Activated CD4-positive, alpha-beta T cell treated with anti-CD3 and anti-CD28 coated beads for 36 hours (primary cell): ENCODE measurements at regions of chr13 and their contacts with region 1.

Region 1: GRCh38 chr13:99442273-99442895 is 58.9 kb upstream of the TM9SF2 start:
- DNase-seq: peak; percentile 61
- ATAC-seq: peak; percentile 61
- H3K4me3 Mint-ChIP-seq: no peak overlapping the region
- H3K27ac Mint-ChIP-seq: no peak overlapping the region
- H3K4me1 Mint-ChIP-seq: peaks cover 9% of the 10 kb centered on the region
- H3K27me3 Mint-ChIP-seq: peaks cover 2% of the 10 kb centered on the region

Region 2: GRCh38 chr13:98821372-98822224 is 620.8 kb before region 1 on chr13:
- CTCF ChIA-PET with region 1: no interaction called
- POLR2A ChIA-PET with region 1: no interaction called
- intact Hi-C with region 1: no loop called
- DNase-seq: no peak
- ATAC-seq: no peak
- H3K4me3 Mint-ChIP-seq: no peak overlapping the region
- H3K27ac Mint-ChIP-seq: no peak overlapping the region
- H3K4me1 Mint-ChIP-seq: peaks cover 12% of the 10 kb centered on the region
- H3K27me3 Mint-ChIP-seq: no peaks in the 10 kb centered on the region

Region 3: DNA sequence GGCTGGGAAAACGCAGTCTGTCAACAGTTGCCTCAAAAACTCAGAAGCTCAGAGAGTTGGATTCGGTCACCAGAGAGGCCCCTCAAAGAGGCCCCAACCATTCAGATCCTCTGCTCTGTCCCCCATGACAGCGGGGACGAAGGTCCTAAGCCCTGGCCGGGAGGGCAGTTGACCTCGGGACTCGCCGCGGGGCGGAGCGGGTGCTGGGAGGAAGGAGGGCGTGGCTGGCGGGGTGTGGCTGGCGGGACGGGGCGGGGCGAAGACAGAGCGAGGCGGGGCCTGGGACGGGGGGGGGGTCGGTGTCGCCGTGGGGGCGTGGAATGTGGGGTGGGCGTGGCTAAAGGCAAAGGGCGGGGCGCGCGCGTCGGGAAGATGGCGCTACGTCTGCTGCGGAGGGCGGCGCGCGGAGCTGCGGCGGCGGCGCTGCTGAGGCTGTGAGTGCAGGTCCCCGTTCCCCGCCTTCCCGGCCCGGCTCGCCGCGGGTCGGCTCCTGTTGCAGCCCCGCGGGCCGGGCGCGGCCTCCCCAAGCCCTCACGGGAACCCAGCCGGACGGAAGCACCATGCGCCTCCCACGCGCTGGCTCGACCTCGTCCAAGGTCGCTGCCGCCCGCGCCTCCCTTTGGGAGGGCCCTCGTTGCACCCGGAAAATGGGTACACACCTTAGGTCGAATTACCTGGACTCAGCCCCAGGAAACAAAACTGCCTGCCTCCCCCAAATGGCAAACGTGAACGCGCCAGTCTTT is 164.1 kb after region 1 on chr13:
- CTCF ChIA-PET with region 1: interaction called, 3 read pairs
- POLR2A ChIA-PET with region 1: no interaction called
- intact Hi-C with region 1: loop called in 1 of 2 experiments (anchors 1 kb)
- DNase-seq: peak; percentile 95
- ATAC-seq: peak; percentile 89
- H3K4me3 Mint-ChIP-seq: peak within 1 kb of the TSS; percentile 83
- H3K27ac Mint-ChIP-seq: peak within 1 kb of the TSS; percentile 81
- H3K4me1 Mint-ChIP-seq: peaks cover 42% of the 10 kb centered on the region
- H3K27me3 Mint-ChIP-seq: no peaks in the 10 kb centered on the region

Region 4: DNA sequence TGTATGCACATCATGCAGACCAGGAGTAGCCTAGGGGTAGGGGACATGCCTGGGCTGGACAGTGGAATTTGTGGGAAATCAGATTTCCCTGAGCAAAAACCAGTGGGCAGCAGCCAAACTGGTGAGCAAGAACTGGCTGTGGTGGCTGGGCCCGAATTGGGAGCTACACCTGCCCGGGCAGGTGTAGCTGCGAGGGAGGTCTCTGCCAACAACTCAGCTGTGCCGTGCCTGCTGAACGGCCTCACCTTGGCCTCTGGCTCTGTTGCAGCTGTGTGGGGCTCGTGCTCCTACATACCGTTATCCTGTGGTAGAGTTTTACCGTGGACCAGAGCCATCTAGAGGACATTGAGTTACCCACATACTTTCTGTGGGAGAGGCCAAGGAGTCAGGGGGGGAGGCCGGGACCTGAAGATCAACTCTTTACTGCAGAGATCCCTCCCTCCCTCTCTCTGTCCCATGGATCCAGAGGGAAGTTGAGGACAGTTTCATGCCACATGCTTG is 172.1 kb after region 1 on chr13:
- CTCF ChIA-PET with region 1: no interaction called
- POLR2A ChIA-PET with region 1: no interaction called
- intact Hi-C with region 1: loop called (anchors 1 to 2 kb)
- DNase-seq: peak; percentile 36
- ATAC-seq: peak; percentile 77
- H3K4me3 Mint-ChIP-seq: no peak overlapping the region
- H3K27ac Mint-ChIP-seq: no peak overlapping the region
- H3K4me1 Mint-ChIP-seq: peaks cover 21% of the 10 kb centered on the region
- H3K27me3 Mint-ChIP-seq: no peaks in the 10 kb centered on the region

Region 5: DNA sequence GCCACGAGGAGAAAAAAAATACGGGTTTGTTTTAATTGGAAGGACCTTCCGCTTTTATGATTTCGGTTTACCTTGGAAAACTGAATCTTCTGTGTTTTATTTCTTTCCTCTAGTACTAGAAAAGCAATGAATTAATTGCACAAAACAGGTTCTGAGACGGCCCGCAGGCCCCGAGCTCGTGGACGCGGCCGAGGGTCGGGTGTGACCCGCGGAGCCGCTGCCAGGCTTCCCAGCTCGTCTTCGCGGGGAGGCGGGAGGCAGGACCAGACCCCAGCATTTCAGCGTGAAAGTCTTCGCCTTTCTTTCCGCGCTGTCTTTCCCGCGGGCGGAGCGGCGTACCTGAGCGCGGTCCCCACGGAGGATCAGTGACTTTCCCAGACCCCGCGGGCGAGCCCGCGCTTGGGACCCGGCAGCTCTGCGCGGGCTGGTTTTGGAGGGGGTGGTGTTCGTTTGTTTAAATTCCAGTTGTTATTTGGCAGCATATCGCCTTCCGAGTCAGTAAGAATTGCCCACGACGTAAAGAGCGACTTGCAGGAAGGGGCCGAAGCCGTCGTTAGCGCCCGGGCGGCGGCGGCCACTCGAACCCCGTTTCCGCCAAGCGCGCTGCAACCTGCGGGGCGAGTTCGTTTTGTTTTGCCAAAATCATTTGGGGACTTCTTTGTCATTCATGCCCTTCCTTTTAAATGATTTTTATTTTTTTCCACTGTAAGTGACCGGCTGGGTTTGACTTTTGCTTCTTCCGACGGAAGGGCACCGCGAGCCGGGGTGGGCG is 453.0 kb after region 1 on chr13:
- CTCF ChIA-PET with region 1: no interaction called
- POLR2A ChIA-PET with region 1: no interaction called
- intact Hi-C with region 1: loop called in 1 of 2 experiments (anchors 5 kb)
- DNase-seq: peak; percentile 24
- ATAC-seq: no peak
- H3K4me3 Mint-ChIP-seq: peak overlapping the region; percentile 60
- H3K27ac Mint-ChIP-seq: no peak overlapping the region
- H3K4me1 Mint-ChIP-seq: peaks cover 9% of the 10 kb centered on the region
- H3K27me3 Mint-ChIP-seq: peaks cover 45% of the 10 kb centered on the region

Region 6: GRCh38 chr13:99969919-99970621 is 527.7 kb after region 1 on chr13:
- CTCF ChIA-PET with region 1: no interaction called
- POLR2A ChIA-PET with region 1: no interaction called
- intact Hi-C with region 1: loop called in 1 of 2 experiments (anchors 10 kb)
- DNase-seq: peak; percentile 63
- ATAC-seq: peak; percentile 54
- H3K4me3 Mint-ChIP-seq: peak overlapping the region; percentile 72
- H3K27ac Mint-ChIP-seq: no peak overlapping the region
- H3K4me1 Mint-ChIP-seq: peaks cover 17% of the 10 kb centered on the region
- H3K27me3 Mint-ChIP-seq: peaks cover 64% of the 10 kb centered on the region

Region 7: DNA sequence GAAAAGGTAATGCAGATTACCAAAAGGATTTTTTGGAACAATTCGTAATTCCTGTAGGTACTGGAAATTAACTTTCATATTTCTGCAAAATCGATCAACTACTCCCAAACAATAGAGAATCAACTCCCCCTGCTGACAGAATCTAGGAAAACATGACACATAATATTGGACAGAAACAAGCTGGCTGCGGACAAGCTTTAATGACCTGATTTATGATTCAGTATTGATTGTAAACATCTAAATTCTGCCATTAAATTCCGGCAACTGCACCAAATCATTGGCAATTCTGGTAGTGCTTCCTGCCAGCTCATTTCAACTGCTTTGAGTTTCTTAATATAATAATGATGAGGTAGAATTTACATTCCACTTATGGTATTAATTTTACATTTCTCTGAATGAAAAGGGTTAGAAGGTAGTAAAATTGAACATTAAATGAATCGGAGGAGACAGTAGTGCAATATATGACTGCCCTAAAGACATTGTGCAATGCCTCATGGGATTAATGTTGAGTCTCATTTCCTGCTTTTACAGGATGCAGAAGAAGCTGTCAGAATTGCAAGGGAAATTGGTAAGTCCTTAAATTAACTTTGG is 793.0 kb after region 1 on chr13:
- CTCF ChIA-PET with region 1: no interaction called
- POLR2A ChIA-PET with region 1: no interaction called
- intact Hi-C with region 1: loop called in 1 of 2 experiments (anchors 10 kb)
- DNase-seq: no peak
- ATAC-seq: no peak
- H3K4me3 Mint-ChIP-seq: no peak overlapping the region
- H3K27ac Mint-ChIP-seq: no peak overlapping the region
- H3K4me1 Mint-ChIP-seq: peaks cover 3% of the 10 kb centered on the region
- H3K27me3 Mint-ChIP-seq: no peaks in the 10 kb centered on the region